ENCODE measurements at regions of chr3 and their contacts with region 1.

Region 1: GRCh38 chr3:4834403-4834866 is 144.8 kb upstream of the BHLHE40 start:
- DNase-seq: peak; percentile 80
- H3K4me3 Mint-ChIP-seq: peak overlapping the region; percentile 79
- H3K27ac Mint-ChIP-seq: peak overlapping the region; percentile 98
- H3K4me1 Mint-ChIP-seq: peaks cover 86% of the 10 kb centered on the region
- H3K27me3 Mint-ChIP-seq: no peaks in the 10 kb centered on the region

Region 2: GRCh38 chr3:4741404-4742307 is 92.8 kb before region 1 on chr3:
- intact Hi-C with region 1: loop called (anchors 1 kb)
- DNase-seq: no peak
- H3K4me3 Mint-ChIP-seq: peak overlapping the region; percentile 74
- H3K27ac Mint-ChIP-seq: peak overlapping the region; percentile 89
- H3K4me1 Mint-ChIP-seq: peaks cover 79% of the 10 kb centered on the region
- H3K27me3 Mint-ChIP-seq: no peaks in the 10 kb centered on the region

Region 3: GRCh38 chr3:4804161-4805058 is 30.0 kb before region 1 on chr3:
- intact Hi-C with region 1: loop called (anchors 1 kb)
- DNase-seq: no peak
- H3K4me3 Mint-ChIP-seq: no peak overlapping the region
- H3K27ac Mint-ChIP-seq: peak overlapping the region; percentile 76
- H3K4me1 Mint-ChIP-seq: peaks cover 59% of the 10 kb centered on the region
- H3K27me3 Mint-ChIP-seq: no peaks in the 10 kb centered on the region

Region 4: DNA sequence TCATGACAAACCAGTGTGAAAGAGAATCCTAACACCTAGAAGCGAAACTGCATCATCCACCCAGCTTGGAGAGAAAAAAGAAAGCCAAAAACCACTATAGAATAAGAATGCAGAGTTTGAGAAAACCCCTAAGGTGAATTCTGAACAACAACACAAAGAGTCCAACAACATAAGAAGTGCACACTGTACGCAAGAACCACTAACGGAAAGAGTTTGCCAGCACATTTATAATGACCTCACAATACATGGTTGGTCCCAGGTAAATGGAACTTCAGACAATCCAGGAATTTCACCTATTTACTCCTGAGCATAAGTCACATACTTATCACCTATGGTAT is 16.5 kb after region 1 on chr3:
- intact Hi-C with region 1: loop called (anchors 1 kb)
- DNase-seq: peak; percentile 56
- H3K4me3 Mint-ChIP-seq: peak overlapping the region; percentile 67
- H3K27ac Mint-ChIP-seq: peak overlapping the region; percentile 99
- H3K4me1 Mint-ChIP-seq: peaks cover 85% of the 10 kb centered on the region
- H3K27me3 Mint-ChIP-seq: no peaks in the 10 kb centered on the region

Region 5: GRCh38 chr3:5026331-5027218 is 192.1 kb after region 1 on chr3:
- intact Hi-C with region 1: loop called (anchors 1 kb)
- DNase-seq: peak; percentile 59
- H3K4me3 Mint-ChIP-seq: peak overlapping the region; percentile 81
- H3K27ac Mint-ChIP-seq: peak overlapping the region; percentile 95
- H3K4me1 Mint-ChIP-seq: peaks cover 70% of the 10 kb centered on the region
- H3K27me3 Mint-ChIP-seq: no peaks in the 10 kb centered on the region

Region 6: GRCh38 chr3:5194341-5195159 is 360.1 kb after region 1 on chr3:
- intact Hi-C with region 1: loop called (anchors 2 kb)
- DNase-seq: peak; percentile 54
- H3K4me3 Mint-ChIP-seq: peak overlapping the region; percentile 74
- H3K27ac Mint-ChIP-seq: peak overlapping the region; percentile 97
- H3K4me1 Mint-ChIP-seq: peaks cover 88% of the 10 kb centered on the region
- H3K27me3 Mint-ChIP-seq: no peaks in the 10 kb centered on the region

Measured in activated T-helper 1 cell treated with anti-CD3 and anti-CD28 coated beads, Interleukin-12 subunit alpha, Interleukin-12 subunit beta, Interleukin-2, Interleukin-4 antibody, amounts not matched to agents 30 ng/mL and 10 ng/mL and 1 ng/mL, durations not matched to agents 14 hours and 24 hours and 36 hours (primary cell).